Activated CD4-positive, alpha-beta memory T cell treated with anti-CD3 and anti-CD28 coated beads for 36 hours (primary cell): ENCODE measurements at regions of chr15 and their contacts with region 1.

Region 1: DNA sequence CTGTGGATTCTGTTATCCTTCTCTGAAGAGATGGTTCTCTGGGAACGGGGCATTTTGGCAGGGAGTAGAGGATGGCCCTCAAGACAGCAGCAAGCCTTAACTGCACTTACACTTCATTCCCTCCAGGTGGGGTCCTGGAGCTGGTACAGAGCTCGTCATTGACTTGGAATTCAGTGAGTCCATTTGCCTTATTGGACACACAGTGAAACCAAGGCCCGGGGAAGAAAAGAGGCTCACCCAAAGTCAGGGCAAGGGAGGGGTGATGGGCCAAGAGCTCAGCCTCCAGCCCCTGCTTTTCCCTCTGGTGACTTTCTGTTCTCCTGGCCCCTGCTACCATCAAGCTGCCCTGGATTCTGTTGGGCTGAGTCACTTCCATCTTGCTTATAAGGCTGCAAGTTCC is 125.6 kb downstream of the ETFA start:
- DNase-seq: peak; percentile 34
- H3K4me3 Mint-ChIP-seq: no peak overlapping the region
- H3K27ac Mint-ChIP-seq: no peak overlapping the region
- H3K4me1 Mint-ChIP-seq: peaks cover 17% of the 10 kb centered on the region
- H3K27me3 Mint-ChIP-seq: peaks cover 53% of the 10 kb centered on the region

Region 2: GRCh38 chr15:76150971-76151598 is 34.6 kb before region 1 on chr15:
- CTCF ChIA-PET with region 1: interaction called, 12 read pairs
- POLR2A ChIA-PET with region 1: no interaction called
- intact Hi-C with region 1: loop called (anchors 1 kb)
- DNase-seq: peak; percentile 90
- H3K4me3 Mint-ChIP-seq: no peak overlapping the region
- H3K27ac Mint-ChIP-seq: no peak overlapping the region
- H3K4me1 Mint-ChIP-seq: peaks cover 23% of the 10 kb centered on the region
- H3K27me3 Mint-ChIP-seq: peaks cover 8% of the 10 kb centered on the region

Region 3: GRCh38 chr15:76285239-76285825 is 99.6 kb after region 1 on chr15:
- CTCF ChIA-PET with region 1: interaction called, 3 read pairs
- POLR2A ChIA-PET with region 1: no interaction called
- intact Hi-C with region 1: loop called (anchors 5 kb)
- DNase-seq: no peak
- H3K4me3 Mint-ChIP-seq: no peak overlapping the region
- H3K27ac Mint-ChIP-seq: no peak overlapping the region
- H3K4me1 Mint-ChIP-seq: peaks cover 13% of the 10 kb centered on the region
- H3K27me3 Mint-ChIP-seq: no peaks in the 10 kb centered on the region

Region 4: GRCh38 chr15:76336254-76337058 is 150.7 kb after region 1 on chr15 and contains the start of gene ISL2:
- CTCF ChIA-PET with region 1: interaction called, 3 read pairs
- POLR2A ChIA-PET with region 1: no interaction called
- intact Hi-C with region 1: loop called (anchors 10 kb)
- DNase-seq: peak; percentile 87
- H3K4me3 Mint-ChIP-seq: peak within 1 kb of the TSS; percentile 49
- H3K27ac Mint-ChIP-seq: no peak within 1 kb of the TSS
- H3K4me1 Mint-ChIP-seq: peaks cover 44% of the 10 kb centered on the region
- H3K27me3 Mint-ChIP-seq: peaks cover 65% of the 10 kb centered on the region
- total RNA-seq, gene ISL2: 0.15 to 0.19 TPM